ENCODE measurements at regions of chr18 and their contacts with region 1.

Region 1: GRCh38 chr18:12308386-12309100 is 502 bp downstream of the TUBB6 start:
- DNase-seq: peak; percentile 85 to 93 (median 90)
- ATAC-seq: peak; percentile 73 to 88 (median 88)
- H3K4me3 ChIP-seq: peak overlapping the region; percentile 44 to 98 (median 82)
- H3K27ac ChIP-seq: peak overlapping the region; percentile 94 to 100 (median 98)
- H3K4me1 ChIP-seq: peaks cover 0 to 44% (median 27%) of the 10 kb centered on the region in 12 donors
- H3K27me3 ChIP-seq: no peaks in the 10 kb centered on the region
- CTCF ChIP-seq: no peak
- POLR2A ChIP-seq: peak in 1 of 2 donors; percentile 1

Region 2: DNA sequence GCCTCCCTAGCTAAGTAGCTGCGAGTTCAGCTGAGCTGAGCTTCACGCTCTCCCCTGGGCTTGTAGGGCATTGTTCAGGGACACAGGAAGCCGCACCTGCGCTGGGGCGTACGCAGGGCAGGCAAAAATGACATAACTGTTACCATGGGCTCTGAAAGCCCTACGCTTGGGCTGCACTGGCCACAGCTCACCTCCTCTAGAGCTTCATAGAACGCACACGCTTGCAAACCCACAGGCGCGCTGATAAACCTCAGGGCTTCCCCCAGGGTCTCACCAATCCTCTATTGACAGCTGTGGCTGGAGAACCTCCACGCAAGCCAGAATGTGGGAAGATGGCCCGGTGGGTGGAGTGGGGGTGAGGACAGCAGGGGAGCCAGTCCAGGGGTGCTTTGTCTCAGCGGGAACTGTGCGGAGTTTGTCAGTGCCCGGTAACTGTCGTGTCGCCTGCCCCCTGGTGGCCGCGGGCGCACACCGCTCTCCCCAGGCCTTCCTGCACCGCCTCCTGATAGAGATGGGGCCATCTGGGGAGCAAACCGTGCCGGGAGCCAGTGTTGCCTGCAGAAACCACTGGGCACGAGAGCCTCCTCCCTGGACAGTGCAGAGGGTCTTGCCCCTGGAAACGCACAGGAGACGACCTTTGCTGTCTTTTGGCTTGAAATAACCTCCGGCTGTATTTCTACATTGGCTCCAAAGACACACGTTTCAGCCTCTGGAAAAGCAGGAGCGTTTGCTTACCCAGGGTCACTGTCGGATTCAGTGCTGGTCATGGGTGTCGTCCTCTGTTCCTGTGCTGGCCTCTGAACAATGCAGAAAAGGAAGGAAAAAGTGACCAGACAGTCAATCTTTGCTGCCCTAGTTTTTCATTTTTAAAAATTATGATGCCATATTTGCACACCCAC is 71.4 kb before region 1 on chr18:
- intact Hi-C with region 1: no loop called
- DNase-seq: peak; percentile 71 to 87 (median 75)
- ATAC-seq: peak; percentile 90 to 97 (median 95)
- H3K4me3 ChIP-seq: no peak overlapping the region
- H3K27ac ChIP-seq: no peak overlapping the region
- H3K4me1 ChIP-seq: peaks cover 0 to 6% (median 0%) of the 10 kb centered on the region in 12 donors
- H3K27me3 ChIP-seq: peaks cover 0 to 10% (median 0%) of the 10 kb centered on the region in 9 donors
- CTCF ChIP-seq: peak; percentile 85 to 92 (median 88)
- POLR2A ChIP-seq: no peak

Region 3: GRCh38 chr18:12257996-12258720 is 50.4 kb before region 1 on chr18:
- intact Hi-C with region 1: no loop called
- DNase-seq: no peak
- ATAC-seq: no peak
- H3K4me3 ChIP-seq: no peak overlapping the region
- H3K27ac ChIP-seq: no peak overlapping the region
- H3K4me1 ChIP-seq: peaks cover 0 to 34% (median 9%) of the 10 kb centered on the region in 12 donors
- H3K27me3 ChIP-seq: peaks cover 0 to 26% (median 15%) of the 10 kb centered on the region in 9 donors
- CTCF ChIP-seq: no peak
- POLR2A ChIP-seq: no peak

Region 4: DNA sequence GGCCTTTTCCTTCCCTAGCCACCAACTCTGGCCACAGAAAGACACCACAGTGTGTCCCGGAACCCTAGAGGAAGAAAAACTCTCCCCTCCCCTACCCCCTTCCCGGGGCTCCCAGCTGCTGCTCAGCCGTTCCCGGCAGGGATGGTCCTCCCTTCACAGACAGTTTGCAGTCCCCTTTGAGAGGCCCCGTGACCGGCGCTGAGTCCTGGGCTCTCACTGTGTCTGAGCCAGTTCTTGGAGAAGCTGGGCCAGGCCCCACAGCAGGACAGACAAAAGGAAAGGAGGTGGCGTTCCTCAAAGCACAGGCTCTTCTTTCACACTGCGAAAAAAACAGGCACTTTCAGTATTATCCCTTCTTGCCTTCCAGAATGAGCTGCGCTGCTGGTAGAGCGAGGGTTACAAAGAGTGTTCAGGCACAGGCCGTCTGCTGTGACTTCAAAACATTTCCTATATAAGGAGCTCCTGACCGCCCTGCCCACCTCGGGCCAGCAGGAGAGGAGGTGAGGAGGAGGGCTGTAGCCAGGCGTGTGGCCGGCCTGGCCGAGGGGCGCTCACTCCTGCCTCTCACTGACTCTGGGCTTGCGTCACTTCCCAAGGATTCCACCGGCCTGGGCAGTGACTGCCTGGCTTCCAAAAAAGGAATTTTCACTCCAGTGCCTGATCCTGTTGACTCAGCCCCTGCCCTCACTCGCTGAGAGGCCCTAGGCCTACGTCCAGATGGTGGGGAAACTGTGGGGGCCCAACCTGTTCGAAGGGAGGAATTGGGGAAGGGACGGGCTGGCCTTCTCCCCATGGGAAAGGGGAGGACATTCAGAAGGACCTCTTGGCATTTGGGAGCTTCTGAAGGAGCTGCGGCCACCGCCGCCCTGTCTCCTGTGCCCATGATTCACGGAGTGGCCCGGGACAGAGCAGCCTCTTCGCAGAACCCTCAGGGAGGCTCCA is 29.5 kb before region 1 on chr18:
- intact Hi-C with region 1: loop called in 2 of 10 experiments (anchors 2 kb)
- DNase-seq: peak; percentile 88 to 95 (median 90)
- ATAC-seq: peak; percentile 93 to 96 (median 95)
- H3K4me3 ChIP-seq: peak overlapping the region; percentile 3 to 61 (median 48)
- H3K27ac ChIP-seq: peak overlapping the region; percentile 87 to 100 (median 96)
- H3K4me1 ChIP-seq: peaks cover 0 to 34% (median 22%) of the 10 kb centered on the region in 12 donors
- H3K27me3 ChIP-seq: no peaks in the 10 kb centered on the region
- CTCF ChIP-seq: peak in 3 of 12 donors; percentile 12 to 30 (median 15)
- POLR2A ChIP-seq: peak; percentile 71 to 89

Region 5: DNA sequence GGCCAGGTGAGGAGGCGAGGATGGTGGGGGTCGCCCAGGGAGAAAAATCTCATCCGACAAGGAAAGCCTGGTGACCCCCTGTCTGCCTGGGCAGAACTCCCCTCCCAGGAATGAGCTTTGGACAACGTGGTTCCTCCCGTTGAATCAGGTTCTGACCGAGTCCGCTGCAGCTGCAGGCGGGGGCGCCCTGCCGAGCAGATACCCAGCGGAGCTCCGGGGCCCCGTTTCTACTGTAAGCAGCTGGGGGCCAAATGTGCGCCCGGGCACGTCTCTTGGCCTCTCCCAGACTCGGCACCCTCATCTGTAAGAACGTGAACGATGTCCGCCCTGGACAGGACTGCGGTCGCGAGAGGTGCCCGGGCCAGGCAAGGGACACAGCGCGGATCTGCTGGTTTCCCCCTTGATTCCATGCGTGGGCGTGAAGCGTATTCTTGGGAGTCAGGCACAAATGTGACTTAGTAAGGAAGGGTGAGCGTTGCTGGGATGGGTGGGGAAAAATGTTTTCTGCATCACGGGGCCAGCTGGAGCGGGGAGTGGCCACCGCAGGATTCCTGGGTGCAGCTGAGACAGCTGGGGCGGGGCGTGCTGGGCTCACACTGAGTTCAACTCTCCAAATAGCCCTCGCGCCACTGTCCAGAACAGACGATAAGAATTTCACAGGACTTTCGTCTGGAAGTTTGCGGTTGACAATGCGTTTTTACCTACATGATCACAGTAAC is 20.7 kb before region 1 on chr18:
- intact Hi-C with region 1: loop called in 1 of 10 experiments (anchors 2 kb)
- DNase-seq: peak; percentile 78 to 90 (median 86)
- ATAC-seq: peak; percentile 89 to 94 (median 92)
- H3K4me3 ChIP-seq: peak overlapping the region; percentile 10 to 67 (median 51)
- H3K27ac ChIP-seq: peak overlapping the region in 10 of 12 donors; percentile 30 to 84 (median 74)
- H3K4me1 ChIP-seq: peaks cover 0 to 21% (median 14%) of the 10 kb centered on the region in 12 donors
- H3K27me3 ChIP-seq: peaks cover 0 to 15% (median 0%) of the 10 kb centered on the region in 9 donors
- CTCF ChIP-seq: no peak
- POLR2A ChIP-seq: peak in 1 of 2 donors; percentile 59

Region 6: GRCh38 chr18:12442946-12443345 is 134.4 kb after region 1 on chr18:
- intact Hi-C with region 1: no loop called
- DNase-seq: no peak
- ATAC-seq: no peak
- H3K4me3 ChIP-seq: no peak overlapping the region
- H3K27ac ChIP-seq: peak overlapping the region in 1 of 12 donors; percentile 17
- H3K4me1 ChIP-seq: no peaks in the 10 kb centered on the region
- H3K27me3 ChIP-seq: no peaks in the 10 kb centered on the region
- CTCF ChIP-seq: no peak
- POLR2A ChIP-seq: no peak

Region 7: GRCh38 chr18:12679183-12679786 is 370.7 kb after region 1 on chr18:
- intact Hi-C with region 1: loop called in 1 of 10 experiments (anchors 2 kb)
- DNase-seq: peak; percentile 71 to 84 (median 79)
- ATAC-seq: peak; percentile 82 to 98 (median 98)
- H3K4me3 ChIP-seq: peak overlapping the region in 8 of 12 donors; percentile 5 to 44 (median 34)
- H3K27ac ChIP-seq: peak overlapping the region; percentile 34 to 90 (median 80)
- H3K4me1 ChIP-seq: peaks cover 0 to 14% (median 8%) of the 10 kb centered on the region in 12 donors
- H3K27me3 ChIP-seq: no peaks in the 10 kb centered on the region
- CTCF ChIP-seq: no peak
- POLR2A ChIP-seq: peak in 1 of 2 donors; percentile 77